Ovary (tissue), 10 donors: ENCODE measurements at regions of chr11 and their contacts with region 1.

Region 1: DNA sequence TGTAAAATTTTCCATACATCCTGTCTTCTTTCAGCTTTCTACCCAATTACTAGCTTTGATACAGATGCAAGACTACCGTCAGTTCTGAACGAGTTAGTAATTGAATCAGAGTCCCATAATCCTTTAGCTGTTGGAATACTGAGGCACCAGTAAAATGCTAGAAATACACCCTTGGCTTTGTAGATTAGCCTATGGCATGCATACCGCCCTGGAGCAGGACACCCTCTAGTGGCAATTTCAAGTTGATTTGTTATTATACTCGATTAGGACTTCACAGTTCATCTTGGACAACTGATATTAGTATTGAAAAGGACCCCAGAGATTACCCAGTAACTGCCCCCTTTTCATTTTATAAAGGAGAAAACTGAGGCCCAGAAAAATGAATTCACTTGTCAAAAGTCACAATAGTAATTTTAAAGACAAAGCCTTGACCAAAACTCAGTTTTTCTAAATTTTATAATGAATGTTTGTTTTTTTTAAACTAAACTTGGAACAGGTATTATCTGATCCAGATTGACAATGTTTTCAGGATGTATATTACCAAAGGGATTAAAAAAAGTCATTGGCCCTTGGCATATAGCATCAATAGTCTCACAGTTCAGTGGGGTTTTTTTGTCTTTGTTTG is 72.6 kb downstream of the HIPK3 start:
- DNase-seq: peak in 1 of 5 donors; percentile 45
- H3K4me3 ChIP-seq: no peak overlapping the region
- H3K27ac ChIP-seq: no peak overlapping the region
- H3K4me1 ChIP-seq: peaks cover 6% of the 10 kb centered on the region
- H3K27me3 ChIP-seq: no peaks in the 10 kb centered on the region
- CTCF ChIP-seq: peak in 2 of 3 donors; percentile 26 to 57
- EP300 ChIP-seq: no peak
- POLR2A ChIP-seq: no peak

Region 2: GRCh38 chr11:33161120-33162005 is 168.5 kb before region 1 on chr11 and contains the start of gene CSTF3:
- intact Hi-C with region 1: loop called (anchors 10 kb)
- DNase-seq: peak; percentile 100
- H3K4me3 ChIP-seq: peak within 1 kb of the TSS; percentile 84
- H3K27ac ChIP-seq: peak within 1 kb of the TSS; percentile 35 to 58
- H3K4me1 ChIP-seq: peaks cover 6% of the 10 kb centered on the region
- H3K27me3 ChIP-seq: no peaks in the 10 kb centered on the region
- CTCF ChIP-seq: peak; percentile 52 to 93 (median 79)
- EP300 ChIP-seq: no peak
- POLR2A ChIP-seq: peak; percentile 71
- total RNA-seq, gene CSTF3: 7.4 to 28.8 (median 24.8) TPM

Region 3: DNA sequence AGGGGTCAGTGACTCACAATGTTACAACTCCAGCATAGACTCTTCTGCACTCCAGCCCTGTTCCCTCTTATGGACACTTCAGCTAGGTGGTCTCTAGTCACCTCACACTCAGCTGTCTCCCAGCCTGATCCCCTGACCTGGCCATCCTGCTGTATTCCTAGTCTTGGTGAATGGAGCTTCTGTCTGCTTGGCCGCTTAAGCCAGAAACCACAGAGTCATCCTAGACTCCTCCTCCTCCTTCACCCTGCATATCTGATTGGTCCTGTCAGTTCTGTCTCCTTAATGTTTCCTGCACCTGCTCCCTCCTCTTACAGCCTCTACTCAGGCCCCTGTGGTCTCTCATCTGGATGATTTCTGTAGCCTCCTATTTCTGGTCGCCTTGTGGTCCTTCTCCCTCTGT is 72.2 kb after region 1 on chr11:
- intact Hi-C with region 1: no loop called
- DNase-seq: no peak
- H3K4me3 ChIP-seq: no peak overlapping the region
- H3K27ac ChIP-seq: no peak overlapping the region
- H3K4me1 ChIP-seq: no peaks in the 10 kb centered on the region
- H3K27me3 ChIP-seq: no peaks in the 10 kb centered on the region
- CTCF ChIP-seq: no peak
- EP300 ChIP-seq: no peak
- POLR2A ChIP-seq: no peak

Region 4: DNA sequence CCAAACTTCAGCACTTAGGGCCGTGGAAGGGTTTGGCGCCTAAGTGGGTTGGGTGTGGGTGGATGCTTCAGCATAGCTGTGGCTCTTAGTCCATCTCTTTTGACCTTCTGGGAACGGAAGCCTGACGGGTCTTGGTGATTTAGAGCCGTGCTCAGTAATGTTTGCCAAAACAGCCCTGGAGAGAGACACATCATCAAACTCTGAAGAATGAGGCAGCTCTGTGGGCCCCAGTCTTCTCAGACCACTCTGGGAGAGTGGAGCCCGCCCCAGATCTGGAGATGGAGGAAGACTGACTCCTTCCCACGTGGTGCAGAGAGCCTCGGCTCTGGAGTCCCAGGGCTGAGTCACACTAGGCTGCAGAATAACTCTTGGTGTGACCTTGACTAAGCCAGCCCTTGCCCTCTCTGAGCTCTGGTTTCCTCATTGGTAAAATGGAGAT is 201.9 kb after region 1 on chr11:
- intact Hi-C with region 1: no loop called
- DNase-seq: no peak
- H3K4me3 ChIP-seq: no peak overlapping the region
- H3K27ac ChIP-seq: no peak overlapping the region
- H3K4me1 ChIP-seq: no peaks in the 10 kb centered on the region
- H3K27me3 ChIP-seq: no peaks in the 10 kb centered on the region
- CTCF ChIP-seq: no peak
- EP300 ChIP-seq: no peak
- POLR2A ChIP-seq: no peak